A549 (cell line): ENCODE measurements at regions of chr5 and their contacts with region 1.

Region 1: DNA sequence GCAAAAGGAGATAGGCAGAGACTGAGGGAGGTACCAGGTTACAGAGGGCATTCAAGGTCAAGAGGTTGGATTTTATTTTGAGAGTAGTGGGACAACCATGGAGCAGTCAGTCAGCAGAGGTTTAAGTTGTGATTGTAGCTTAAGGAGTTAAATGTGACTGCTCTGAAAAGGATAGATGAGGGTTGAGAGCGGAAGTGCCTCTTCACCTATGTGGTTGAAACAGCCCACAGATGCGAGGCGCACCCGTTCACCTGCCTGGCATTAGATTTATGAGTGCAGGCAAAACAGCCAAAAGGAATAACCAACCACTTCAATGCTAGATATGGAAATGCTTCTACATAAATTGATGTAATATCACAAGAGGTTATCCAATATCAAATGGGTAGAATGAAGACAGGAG is 8.4 kb downstream of the ZNF474 start:
- DNase-seq: no peak
- ATAC-seq: no peak
- H3K4me3 ChIP-seq: no peak overlapping the region
- H3K27ac ChIP-seq: no peak overlapping the region
- H3K4me1 ChIP-seq: no peaks in the 10 kb centered on the region
- CTCF ChIP-seq: no peak
- EP300 ChIP-seq: no peak
- POLR2A ChIP-seq: no peak
- RAD21 ChIP-seq: no peak

Region 2: GRCh38 chr5:122120957-122121356 is 16.7 kb before region 1 on chr5:
- CTCF ChIA-PET with region 1: no interaction called
- POLR2A ChIA-PET with region 1: no interaction called
- DNase-seq: peak in 1 of 2 experiments; percentile 4
- ATAC-seq: no peak
- H3K4me3 ChIP-seq: no peak overlapping the region
- H3K27ac ChIP-seq: no peak overlapping the region
- H3K4me1 ChIP-seq: no peaks in the 10 kb centered on the region
- CTCF ChIP-seq: no peak
- EP300 ChIP-seq: no peak
- POLR2A ChIP-seq: no peak
- RAD21 ChIP-seq: no peak

Region 3: DNA sequence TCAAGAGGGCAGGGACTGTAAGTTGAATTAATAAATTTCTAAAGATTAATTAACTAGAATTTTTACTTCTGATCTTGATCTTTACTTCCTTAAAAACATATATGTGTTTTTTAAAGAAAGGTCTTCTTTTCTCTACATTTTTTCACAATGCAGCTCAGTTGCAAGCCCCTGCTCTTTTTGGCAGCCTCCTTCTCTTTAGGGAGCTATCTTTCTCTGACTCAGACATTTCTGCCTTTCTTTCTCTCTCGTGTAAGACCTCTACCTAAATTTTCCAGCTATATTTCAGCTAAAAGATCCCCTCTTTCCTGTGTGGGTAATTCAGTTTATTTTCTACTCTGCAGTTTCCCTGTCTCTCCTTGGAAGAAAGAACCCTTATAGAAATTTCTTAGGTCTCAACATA is 136.0 kb after region 1 on chr5:
- CTCF ChIA-PET with region 1: no interaction called
- POLR2A ChIA-PET with region 1: interaction called, 10 read pairs
- DNase-seq: no peak
- ATAC-seq: no peak
- H3K4me3 ChIP-seq: no peak overlapping the region
- H3K27ac ChIP-seq: no peak overlapping the region
- H3K4me1 ChIP-seq: no peaks in the 10 kb centered on the region
- CTCF ChIP-seq: no peak
- EP300 ChIP-seq: no peak
- POLR2A ChIP-seq: no peak
- RAD21 ChIP-seq: no peak

Region 4: DNA sequence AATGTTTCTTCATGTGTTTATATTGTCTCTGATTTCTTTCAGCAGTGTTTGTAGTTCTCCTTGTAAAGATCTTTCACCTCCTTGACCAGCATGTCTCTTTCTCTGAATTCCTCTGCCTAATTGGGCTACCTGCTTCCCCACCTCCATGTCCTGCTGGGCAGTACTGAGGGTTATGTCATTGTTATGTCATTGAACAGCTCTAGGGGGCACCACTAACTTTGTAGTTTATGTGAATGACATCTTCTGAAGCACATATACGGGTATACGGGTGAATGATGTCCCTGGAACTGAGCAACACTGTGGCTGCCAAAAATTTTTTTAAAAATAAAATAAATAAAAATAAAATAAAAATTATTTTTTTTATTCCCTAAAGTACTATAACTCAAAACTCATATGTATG is 157.4 kb after region 1 on chr5:
- CTCF ChIA-PET with region 1: no interaction called
- POLR2A ChIA-PET with region 1: no interaction called
- DNase-seq: peak in 1 of 2 experiments; percentile 15
- ATAC-seq: peak in 1 of 2 experiments; percentile 42; a peak in 1 of 6 replicates
- H3K4me3 ChIP-seq: no peak overlapping the region
- H3K27ac ChIP-seq: no peak overlapping the region
- H3K4me1 ChIP-seq: no peaks in the 10 kb centered on the region
- CTCF ChIP-seq: no peak
- EP300 ChIP-seq: no peak
- POLR2A ChIP-seq: no peak
- RAD21 ChIP-seq: peak in 1 of 2 experiments; percentile 23; a peak in 2 of 5 replicates